Activated CD4-positive, alpha-beta T cell treated with anti-CD3 and anti-CD28 coated beads, Interleukin-2, amount 10 ng/mL, durations not matched to agents 24 days and 14 days (primary cell): ENCODE measurements at regions of chr2 and their contacts with region 1.

Region 1: DNA sequence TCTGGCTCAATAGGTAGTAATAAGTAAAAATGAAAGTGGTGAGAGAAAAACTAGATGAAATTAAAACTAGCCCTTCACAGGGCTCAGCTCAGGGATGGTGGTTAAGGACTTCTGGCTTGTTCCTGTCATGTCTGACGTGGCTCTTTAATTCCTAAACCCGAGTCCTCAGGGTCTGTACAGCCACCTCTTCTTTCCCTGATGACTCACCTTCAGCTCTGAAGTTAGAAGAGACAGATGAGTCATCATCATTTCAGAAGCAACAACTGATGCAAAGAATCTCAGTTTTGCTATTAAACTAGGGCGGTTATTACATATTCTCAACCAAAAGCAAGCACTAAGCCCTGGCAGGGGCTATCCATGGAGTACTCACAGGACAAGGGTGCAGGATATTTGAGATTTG is 24.0 kb upstream of the ITGB6 start:
- DNase-seq: peak; percentile 73
- H3K4me3 Mint-ChIP-seq: peak overlapping the region; percentile 31
- H3K27ac Mint-ChIP-seq: peak overlapping the region; percentile 67
- H3K4me1 Mint-ChIP-seq: peaks cover 44% of the 10 kb centered on the region
- H3K27me3 Mint-ChIP-seq: peaks cover 4% of the 10 kb centered on the region

Region 2: DNA sequence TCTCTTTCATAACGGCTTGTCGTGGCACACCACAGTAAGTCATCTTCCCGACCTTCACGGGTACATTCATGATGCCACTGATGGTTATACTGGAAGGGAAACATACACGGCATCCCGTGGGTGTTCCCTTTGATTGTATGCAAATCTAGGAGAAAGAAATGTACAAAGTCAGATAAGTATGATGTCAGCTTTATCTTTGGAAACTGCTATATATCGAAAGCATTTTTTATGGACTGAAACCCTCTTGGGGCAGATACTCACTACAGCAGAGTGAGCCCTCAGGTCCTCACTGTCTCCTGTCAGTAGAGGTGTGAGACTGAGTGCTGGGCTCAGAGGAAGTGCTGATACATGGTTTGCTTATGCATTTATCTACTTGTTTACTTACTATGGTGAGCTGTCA is 182.0 kb before region 1 on chr2:
- intact Hi-C with region 1: loop called (anchors 1 kb)
- DNase-seq: no peak
- H3K4me3 Mint-ChIP-seq: no peak overlapping the region
- H3K27ac Mint-ChIP-seq: no peak overlapping the region
- H3K4me1 Mint-ChIP-seq: peaks cover 2% of the 10 kb centered on the region
- H3K27me3 Mint-ChIP-seq: peaks cover 9% of the 10 kb centered on the region

Region 3: DNA sequence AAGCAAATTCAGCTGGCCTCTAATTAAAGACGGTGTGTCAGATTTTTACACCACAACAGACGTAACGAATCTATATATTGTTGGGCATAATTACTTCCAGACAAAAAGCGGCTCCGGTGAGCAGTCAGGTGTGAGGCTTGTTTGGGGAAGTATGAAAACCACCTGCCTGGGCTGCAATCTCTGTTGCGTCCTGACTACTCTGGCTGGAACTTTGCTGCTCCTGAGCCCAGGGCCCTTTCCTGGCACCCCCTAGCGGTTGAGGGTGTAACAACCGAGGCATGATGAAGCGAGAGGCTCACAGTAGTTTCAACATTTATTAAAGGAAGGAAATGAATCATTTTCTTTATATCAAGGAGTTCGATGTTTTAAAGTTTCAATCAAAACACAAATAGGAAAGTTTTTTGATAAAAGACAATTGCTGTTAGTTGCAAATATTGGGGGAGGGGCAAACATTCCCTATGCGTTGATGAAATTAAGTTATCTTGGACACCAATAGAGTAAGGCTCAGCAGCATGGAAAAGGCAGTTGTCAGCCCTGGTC is 13.4 kb before region 1 on chr2:
- intact Hi-C with region 1: loop called (anchors 1 kb)
- DNase-seq: peak; percentile 89
- H3K4me3 Mint-ChIP-seq: no peak overlapping the region
- H3K27ac Mint-ChIP-seq: no peak overlapping the region
- H3K4me1 Mint-ChIP-seq: peaks cover 15% of the 10 kb centered on the region
- H3K27me3 Mint-ChIP-seq: peaks cover 21% of the 10 kb centered on the region

Region 4: DNA sequence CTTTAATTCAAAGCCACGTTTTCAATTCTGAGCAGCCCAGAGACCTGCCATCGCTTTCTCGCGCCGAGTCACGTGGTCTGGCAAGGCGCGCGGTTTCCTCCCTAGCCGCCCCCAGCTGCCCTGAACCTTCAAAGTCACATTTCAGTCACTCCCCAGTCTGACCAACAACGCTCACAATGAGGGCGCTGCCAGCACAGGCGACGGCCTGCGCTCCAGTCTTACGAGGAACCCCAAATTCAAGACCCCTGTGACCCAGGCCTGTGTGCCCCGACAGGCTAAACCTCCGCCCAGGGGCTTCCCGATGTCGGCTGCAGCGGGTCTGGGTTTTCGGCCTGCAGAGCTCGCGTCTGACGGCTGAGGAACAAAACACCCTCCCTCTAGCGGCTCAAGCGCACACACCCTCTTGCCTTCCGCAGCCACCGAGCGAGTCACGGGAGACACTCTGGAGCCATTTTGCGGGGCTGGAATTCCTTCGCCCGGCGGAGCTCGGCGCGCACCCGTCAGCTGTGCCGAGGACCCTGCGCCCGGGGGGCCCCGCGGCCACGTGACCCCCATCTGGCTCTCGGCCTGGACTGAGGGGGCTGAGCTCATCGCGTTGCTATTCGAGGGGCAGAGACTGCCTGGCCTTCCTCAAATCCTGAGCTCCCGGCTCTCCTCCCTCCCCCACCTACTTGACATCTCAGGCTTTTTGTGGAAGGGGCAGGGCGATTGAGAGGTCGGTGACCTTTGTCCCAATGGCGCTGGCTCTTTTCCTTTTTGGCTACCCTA is 45.9 kb after region 1 on chr2:
- intact Hi-C with region 1: loop called (anchors 2 kb)
- DNase-seq: peak; percentile 79
- H3K4me3 Mint-ChIP-seq: peak overlapping the region; percentile 74
- H3K27ac Mint-ChIP-seq: peak overlapping the region; percentile 73
- H3K4me1 Mint-ChIP-seq: peaks cover 42% of the 10 kb centered on the region
- H3K27me3 Mint-ChIP-seq: peaks cover 10% of the 10 kb centered on the region

Region 5: DNA sequence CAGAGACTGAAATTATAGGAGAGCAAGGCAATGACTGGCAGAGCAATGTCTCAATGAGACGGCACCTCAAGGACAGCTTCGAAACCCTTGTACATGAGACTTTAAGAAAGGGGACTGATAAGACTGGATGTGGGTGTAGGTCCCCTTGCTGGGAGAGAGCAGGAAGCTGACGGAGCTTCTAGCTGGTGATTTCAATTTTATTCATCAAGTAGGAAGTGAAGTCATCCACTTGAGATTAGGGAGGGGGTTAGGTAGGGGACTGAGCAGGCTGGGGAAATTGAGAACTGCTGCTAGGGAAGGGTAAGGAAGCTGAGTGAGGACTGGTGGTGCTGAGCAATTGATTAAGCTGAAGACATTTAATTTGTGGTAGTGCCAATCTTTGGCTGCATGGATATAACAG is 75.5 kb after region 1 on chr2:
- intact Hi-C with region 1: loop called (anchors 5 kb)
- DNase-seq: no peak
- H3K4me3 Mint-ChIP-seq: no peak overlapping the region
- H3K27ac Mint-ChIP-seq: peak overlapping the region; percentile 45
- H3K4me1 Mint-ChIP-seq: peaks cover 58% of the 10 kb centered on the region
- H3K27me3 Mint-ChIP-seq: no peaks in the 10 kb centered on the region

Region 6: GRCh38 chr2:160505256-160505655 is 281.2 kb after region 1 on chr2:
- intact Hi-C with region 1: loop called (anchors 5 kb)
- DNase-seq: peak; percentile 43
- H3K4me3 Mint-ChIP-seq: no peak overlapping the region
- H3K27ac Mint-ChIP-seq: no peak overlapping the region
- H3K4me1 Mint-ChIP-seq: peaks cover 12% of the 10 kb centered on the region
- H3K27me3 Mint-ChIP-seq: no peaks in the 10 kb centered on the region

Region 7: GRCh38 chr2:161160226-161161069 is 936.4 kb after region 1 on chr2 and contains the start of gene TANK:
- intact Hi-C with region 1: loop called (anchors 10 kb)
- DNase-seq: peak; percentile 96
- H3K4me3 Mint-ChIP-seq: peak within 1 kb of the TSS; percentile 97
- H3K27ac Mint-ChIP-seq: peak within 1 kb of the TSS; percentile 98
- H3K4me1 Mint-ChIP-seq: peaks cover 55% of the 10 kb centered on the region
- H3K27me3 Mint-ChIP-seq: no peaks in the 10 kb centered on the region
- total RNA-seq, gene TANK: 91.2 and 97.2 TPM in 2 replicates